HepG2 (cell line): ENCODE measurements at regions of chr11 and their contacts with region 1.

Region 1: GRCh38 chr11:12411806-12412727 is 34.7 kb downstream of the PARVA start:
- DNase-seq: peak; percentile 31
- ATAC-seq: peak; percentile 97
- H3K4me3 ChIP-seq: no peak overlapping the region
- H3K27ac ChIP-seq: no peak overlapping the region
- H3K4me1 ChIP-seq: no peaks in the 10 kb centered on the region; the same call in 1 of the 2 replicates
- H3K27me3 ChIP-seq: no peaks in the 10 kb centered on the region
- CTCF ChIP-seq: peak; percentile 82
- EP300 ChIP-seq: no peak
- POLR2A ChIP-seq: no peak
- RAD21 ChIP-seq: peak; percentile 72

Region 2: GRCh38 chr11:12356944-12357650 is 55.0 kb before region 1 on chr11:
- CTCF ChIA-PET with region 1: no interaction called
- POLR2A ChIA-PET with region 1: no interaction called
- in situ Hi-C with region 1: loop called (anchors 10 kb)
- intact Hi-C with region 1: no loop called
- DNase-seq: no peak
- ATAC-seq: no peak
- H3K4me3 ChIP-seq: no peak overlapping the region
- H3K27ac ChIP-seq: no peak overlapping the region
- H3K4me1 ChIP-seq: peaks cover 6% of the 10 kb centered on the region; the same call in 1 of the 2 replicates
- H3K27me3 ChIP-seq: peaks cover 0 to 1% of the 10 kb centered on the region in 2 experiments; a peak in 1 of 5 replicates
- CTCF ChIP-seq: no peak
- EP300 ChIP-seq: no peak
- POLR2A ChIP-seq: no peak
- RAD21 ChIP-seq: no peak

Region 3: GRCh38 chr11:12377824-12378593 is 34.1 kb before region 1 on chr11:
- CTCF ChIA-PET with region 1: no interaction called
- POLR2A ChIA-PET with region 1: no interaction called
- in situ Hi-C with region 1: no loop called
- intact Hi-C with region 1: no loop called
- DNase-seq: peak; percentile 62
- ATAC-seq: peak; percentile 91
- H3K4me3 ChIP-seq: peak overlapping the region; percentile 80 to 91 (median 86)
- H3K27ac ChIP-seq: peak overlapping the region; percentile 63
- H3K4me1 ChIP-seq: peaks cover 27% of the 10 kb centered on the region
- H3K27me3 ChIP-seq: peaks cover 0 to 4% of the 10 kb centered on the region in 2 experiments; a peak in 1 of 5 replicates
- CTCF ChIP-seq: peak; percentile 32
- EP300 ChIP-seq: no peak
- POLR2A ChIP-seq: peak; percentile 30 to 35; a peak in 1 of 4 replicates
- RAD21 ChIP-seq: peak; percentile 59; the same call in 1 of the 2 replicates

Region 4: GRCh38 chr11:12461516-12461915 is 49.4 kb after region 1 on chr11:
- CTCF ChIA-PET with region 1: no interaction called
- POLR2A ChIA-PET with region 1: no interaction called
- in situ Hi-C with region 1: no loop called
- intact Hi-C with region 1: no loop called
- DNase-seq: no peak
- ATAC-seq: no peak
- H3K4me3 ChIP-seq: no peak overlapping the region
- H3K27ac ChIP-seq: no peak overlapping the region
- H3K4me1 ChIP-seq: peaks cover 8% of the 10 kb centered on the region; the same call in 1 of the 2 replicates
- H3K27me3 ChIP-seq: no peaks in the 10 kb centered on the region
- CTCF ChIP-seq: no peak
- EP300 ChIP-seq: no peak
- POLR2A ChIP-seq: no peak
- RAD21 ChIP-seq: no peak

Region 5: GRCh38 chr11:12485328-12485727 is 73.3 kb after region 1 on chr11:
- CTCF ChIA-PET with region 1: no interaction called
- POLR2A ChIA-PET with region 1: no interaction called
- in situ Hi-C with region 1: no loop called
- intact Hi-C with region 1: loop called (anchors 5 kb)
- DNase-seq: no peak
- ATAC-seq: no peak
- H3K4me3 ChIP-seq: no peak overlapping the region
- H3K27ac ChIP-seq: no peak overlapping the region
- H3K4me1 ChIP-seq: no peaks in the 10 kb centered on the region
- H3K27me3 ChIP-seq: no peaks in the 10 kb centered on the region
- CTCF ChIP-seq: no peak
- EP300 ChIP-seq: no peak
- POLR2A ChIP-seq: no peak
- RAD21 ChIP-seq: no peak

Region 6: GRCh38 chr11:12888525-12889158 is 476.6 kb after region 1 on chr11:
- CTCF ChIA-PET with region 1: interaction called, 12 read pairs
- POLR2A ChIA-PET with region 1: no interaction called
- in situ Hi-C with region 1: loop called (anchors 5 kb)
- intact Hi-C with region 1: no loop called
- DNase-seq: peak; percentile 71
- ATAC-seq: peak; percentile 90
- H3K4me3 ChIP-seq: no peak overlapping the region
- H3K27ac ChIP-seq: no peak overlapping the region
- H3K4me1 ChIP-seq: no peaks in the 10 kb centered on the region
- H3K27me3 ChIP-seq: no peaks in the 10 kb centered on the region
- CTCF ChIP-seq: peak; percentile 88
- EP300 ChIP-seq: no peak
- POLR2A ChIP-seq: no peak
- RAD21 ChIP-seq: peak; percentile 89

Region 7: GRCh38 chr11:12893787-12894672 is 482.0 kb after region 1 on chr11:
- CTCF ChIA-PET with region 1: interaction called, 12 read pairs
- POLR2A ChIA-PET with region 1: no interaction called
- in situ Hi-C with region 1: loop called (anchors 5 kb)
- intact Hi-C with region 1: loop called (anchors 1 kb)
- DNase-seq: peak; percentile 39
- ATAC-seq: peak; percentile 82
- H3K4me3 ChIP-seq: no peak overlapping the region
- H3K27ac ChIP-seq: no peak overlapping the region
- H3K4me1 ChIP-seq: no peaks in the 10 kb centered on the region
- H3K27me3 ChIP-seq: no peaks in the 10 kb centered on the region
- CTCF ChIP-seq: peak; percentile 68
- EP300 ChIP-seq: no peak
- POLR2A ChIP-seq: no peak
- RAD21 ChIP-seq: peak; percentile 64; the same call in 1 of the 2 replicates